Activated naive CD4-positive, alpha-beta T cell treated with anti-CD3 and anti-CD28 coated beads for 36 hours (primary cell): ENCODE measurements at regions of chr14 and their contacts with region 1.

Region 1: DNA sequence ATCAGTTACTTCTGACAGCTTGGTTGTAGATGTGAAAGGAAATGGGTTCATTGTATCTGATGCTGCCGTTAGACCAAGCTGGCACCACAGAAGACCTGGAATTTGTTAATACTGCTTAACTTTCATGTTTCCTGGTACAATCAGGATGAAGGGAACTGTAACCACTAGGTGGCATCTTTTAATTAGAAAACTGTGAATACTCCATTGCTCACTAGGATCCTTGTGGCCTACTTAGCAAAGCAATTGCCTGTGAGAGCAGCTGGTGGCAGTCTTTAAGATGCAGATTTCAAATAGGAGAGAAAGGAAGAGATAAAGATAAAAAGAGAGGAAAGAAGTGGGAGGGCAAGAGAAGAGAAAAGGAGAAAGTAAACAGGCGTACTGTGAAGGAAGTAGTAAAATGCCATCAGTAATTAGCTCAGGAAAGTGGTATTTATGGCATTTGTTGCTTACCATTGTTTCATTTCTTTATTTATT is 114.5 kb downstream of the RAD51B start:
- DNase-seq: peak; percentile 12
- H3K4me3 Mint-ChIP-seq: no peak overlapping the region
- H3K27ac Mint-ChIP-seq: no peak overlapping the region
- H3K4me1 Mint-ChIP-seq: peaks cover 4% of the 10 kb centered on the region
- H3K27me3 Mint-ChIP-seq: no peaks in the 10 kb centered on the region

Region 2: GRCh38 chr14:68408680-68409079 is 474.6 kb after region 1 on chr14:
- CTCF ChIA-PET with region 1: no interaction called
- intact Hi-C with region 1: loop called (anchors 10 kb)
- DNase-seq: peak; percentile 34
- H3K4me3 Mint-ChIP-seq: no peak overlapping the region
- H3K27ac Mint-ChIP-seq: no peak overlapping the region
- H3K4me1 Mint-ChIP-seq: peaks cover 25% of the 10 kb centered on the region
- H3K27me3 Mint-ChIP-seq: no peaks in the 10 kb centered on the region